ENCODE measurements at regions of chr6 and their contacts with region 1.

Region 1: GRCh38 chr6:119147101-119148053 is 68.9 kb upstream of the FAM184A start:
- DNase-seq: peak; percentile 77
- H3K4me3 Mint-ChIP-seq: no peak overlapping the region
- H3K27ac Mint-ChIP-seq: peak overlapping the region; percentile 48
- H3K4me1 Mint-ChIP-seq: peaks cover 43% of the 10 kb centered on the region
- H3K27me3 Mint-ChIP-seq: peaks cover 6% of the 10 kb centered on the region

Region 2: DNA sequence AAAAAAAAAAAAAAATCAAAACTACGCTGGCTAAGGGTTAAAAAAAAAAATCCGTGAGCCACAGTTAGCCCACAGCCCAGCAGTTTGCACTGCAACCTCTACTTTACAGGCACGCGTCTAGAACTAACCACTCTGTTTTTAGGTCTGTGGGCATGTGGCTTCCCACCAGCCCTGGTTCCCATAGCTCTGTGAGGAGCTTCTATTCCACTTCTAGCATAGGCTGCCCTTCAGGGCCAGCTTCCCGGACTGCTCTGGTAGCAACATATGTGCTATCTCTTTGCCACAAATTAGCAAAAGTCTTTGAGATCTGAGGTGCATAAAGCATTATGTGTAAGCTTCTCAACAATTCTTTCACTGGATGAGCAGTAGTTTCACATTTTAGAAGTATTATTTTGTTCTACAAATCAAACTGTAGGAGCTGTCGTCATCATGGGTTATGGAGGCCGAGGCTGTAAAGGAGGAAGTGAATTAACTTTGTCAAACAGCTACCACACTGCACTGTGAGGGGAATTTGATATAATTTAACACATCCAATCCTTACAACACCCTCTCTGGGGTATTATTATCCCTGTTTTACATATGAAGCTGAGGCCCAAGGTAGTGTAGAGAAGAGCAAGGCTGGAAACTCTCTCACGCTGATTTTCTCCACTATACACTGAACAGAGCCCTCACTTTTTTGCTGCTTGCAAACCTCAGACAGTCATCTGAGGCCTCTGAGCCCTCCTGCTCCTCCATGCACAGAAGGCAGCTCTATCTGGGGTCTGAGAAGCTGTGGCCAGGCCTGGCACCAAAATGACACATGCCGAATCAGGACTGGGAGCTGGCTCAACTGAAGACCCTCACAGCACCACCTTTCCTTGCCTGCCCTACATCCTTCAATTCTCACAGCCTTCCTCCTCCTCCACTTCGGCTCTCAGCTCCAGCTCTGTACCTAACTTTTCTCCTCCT is 166.8 kb after region 1 on chr6:
- CTCF ChIA-PET with region 1: interaction called, 9 read pairs
- intact Hi-C with region 1: loop called (anchors 1 kb)
- DNase-seq: peak; percentile 65
- H3K4me3 Mint-ChIP-seq: peak overlapping the region; percentile 41
- H3K27ac Mint-ChIP-seq: peak overlapping the region; percentile 92
- H3K4me1 Mint-ChIP-seq: peaks cover 58% of the 10 kb centered on the region
- H3K27me3 Mint-ChIP-seq: no peaks in the 10 kb centered on the region

Region 3: DNA sequence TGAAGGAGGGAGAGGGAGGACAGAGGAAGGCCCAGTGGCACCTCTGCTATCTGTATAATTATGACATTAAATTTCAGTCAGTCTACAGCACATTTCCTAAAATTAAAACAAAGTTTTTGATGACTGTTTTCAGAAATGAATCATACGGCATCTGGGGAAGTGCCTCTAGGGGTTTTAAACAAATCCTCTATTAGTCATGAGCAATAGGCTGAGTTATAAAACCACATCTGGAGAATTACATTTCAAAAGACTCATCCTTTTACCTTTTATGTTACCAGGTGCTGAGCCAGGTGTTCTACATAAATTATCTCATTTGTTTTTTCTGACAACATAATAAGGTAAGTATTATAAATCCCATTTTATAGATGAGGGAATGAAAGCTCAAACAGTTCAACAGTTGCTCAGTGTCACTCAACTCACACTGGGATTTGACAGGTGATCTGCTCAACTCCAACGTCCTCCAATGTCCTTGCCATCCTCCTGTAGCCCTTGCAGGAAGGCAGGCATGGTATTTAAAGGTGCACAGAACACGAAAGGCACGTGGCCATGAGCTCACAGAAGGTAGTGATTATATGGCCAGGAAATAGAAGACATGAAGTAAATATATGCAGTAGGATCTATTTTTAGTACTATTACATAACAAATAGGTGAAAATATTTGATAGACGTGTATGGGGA is 386.4 kb after region 1 on chr6:
- CTCF ChIA-PET with region 1: no interaction called
- intact Hi-C with region 1: loop called (anchors 1 kb)
- DNase-seq: peak; percentile 16
- H3K4me3 Mint-ChIP-seq: no peak overlapping the region
- H3K27ac Mint-ChIP-seq: no peak overlapping the region
- H3K4me1 Mint-ChIP-seq: peaks cover 9% of the 10 kb centered on the region
- H3K27me3 Mint-ChIP-seq: peaks cover 6% of the 10 kb centered on the region

Region 4: GRCh38 chr6:119978274-119978889 is 831.0 kb after region 1 on chr6:
- CTCF ChIA-PET with region 1: no interaction called
- intact Hi-C with region 1: loop called (anchors 5 kb)
- DNase-seq: peak; percentile 16
- H3K4me3 Mint-ChIP-seq: no peak overlapping the region
- H3K27ac Mint-ChIP-seq: no peak overlapping the region
- H3K4me1 Mint-ChIP-seq: no peaks in the 10 kb centered on the region
- H3K27me3 Mint-ChIP-seq: no peaks in the 10 kb centered on the region